ENCODE measurements at regions of chr11 and their contacts with region 1.

Region 1: GRCh38 chr11:108222686-108223448 is at the start of gene ATM:
- DNase-seq: peak; percentile 94 to 100 (median 99)
- ATAC-seq: peak; percentile 78 to 79
- H3K4me3 Mint-ChIP-seq: no peak within 1 kb of the TSS
- H3K27ac Mint-ChIP-seq: no peak within 1 kb of the TSS
- H3K4me1 Mint-ChIP-seq: peaks cover 24 to 53% (median 42%) of the 10 kb centered on the region in 4 donors
- H3K27me3 Mint-ChIP-seq: no peaks in the 10 kb centered on the region
- polyA plus RNA-seq, gene ATM: 105 to 164 (median 121) TPM

Region 2: GRCh38 chr11:108237058-108237481 is 14.2 kb after region 1 on chr11:
- POLR2A ChIA-PET with region 1: interaction called, 705 read pairs
- DNase-seq: peak in 3 of 10 donors; percentile 27 to 49 (median 43)
- ATAC-seq: peak; percentile 33 to 53
- H3K4me3 Mint-ChIP-seq: peak overlapping the region; percentile 23 to 87 (median 73)
- H3K27ac Mint-ChIP-seq: peak overlapping the region in 9 of 10 donors; percentile 90 to 98 (median 96)
- H3K4me1 Mint-ChIP-seq: peaks cover 29 to 88% (median 77%) of the 10 kb centered on the region in 4 donors
- H3K27me3 Mint-ChIP-seq: no peaks in the 10 kb centered on the region

Region 3: DNA sequence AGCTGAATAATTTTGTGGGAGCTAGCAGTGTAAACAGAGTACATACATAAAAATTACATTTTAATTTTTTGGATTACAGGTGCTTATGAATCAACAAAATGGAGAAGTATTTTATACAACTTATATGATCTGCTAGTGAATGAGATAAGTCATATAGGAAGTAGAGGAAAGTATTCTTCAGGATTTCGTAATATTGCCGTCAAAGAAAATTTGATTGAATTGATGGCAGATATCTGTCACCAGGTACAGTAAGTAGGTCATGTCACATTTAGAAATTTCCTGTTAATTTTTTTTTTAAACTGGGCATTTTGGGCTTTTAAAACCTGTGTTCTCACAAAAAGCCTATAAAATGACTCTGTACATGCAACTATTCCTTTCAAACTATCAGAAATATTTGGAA is 24.0 kb after region 1 on chr11:
- POLR2A ChIA-PET with region 1: interaction called, 705 read pairs
- DNase-seq: no peak
- ATAC-seq: no peak
- H3K4me3 Mint-ChIP-seq: peak overlapping the region in 8 of 10 donors; percentile 1 to 73 (median 20)
- H3K27ac Mint-ChIP-seq: peak overlapping the region in 9 of 10 donors; percentile 34 to 95 (median 79)
- H3K4me1 Mint-ChIP-seq: peaks cover 25 to 86% (median 80%) of the 10 kb centered on the region in 4 donors
- H3K27me3 Mint-ChIP-seq: no peaks in the 10 kb centered on the region

Region 4: DNA sequence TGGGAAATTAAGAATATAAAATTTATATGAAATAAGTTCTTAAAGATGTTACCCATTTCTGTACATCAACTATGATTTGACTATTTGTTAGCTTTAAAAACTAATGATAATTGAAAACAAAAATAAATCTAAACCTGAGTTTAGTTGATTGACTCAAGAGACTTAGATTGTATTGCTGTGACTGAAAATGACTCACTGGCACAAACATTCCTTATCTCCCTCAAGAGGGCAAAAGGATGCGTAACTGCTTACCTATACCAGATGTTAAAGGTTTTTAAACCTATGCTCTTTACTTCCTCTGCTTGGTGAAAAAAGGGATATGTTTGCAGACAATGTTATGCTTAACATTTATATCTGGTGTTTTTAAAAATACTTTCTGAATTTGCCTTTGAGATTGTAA is 30.3 kb after region 1 on chr11:
- POLR2A ChIA-PET with region 1: interaction called, 75 read pairs
- DNase-seq: no peak
- ATAC-seq: peak; percentile 47 to 61
- H3K4me3 Mint-ChIP-seq: peak overlapping the region in 1 of 10 donors; percentile 26
- H3K27ac Mint-ChIP-seq: peak overlapping the region in 9 of 10 donors; percentile 18 to 90 (median 76)
- H3K4me1 Mint-ChIP-seq: peaks cover 18 to 79% (median 65%) of the 10 kb centered on the region in 4 donors
- H3K27me3 Mint-ChIP-seq: no peaks in the 10 kb centered on the region

Region 5: GRCh38 chr11:108278546-108278945 is 55.7 kb after region 1 on chr11:
- POLR2A ChIA-PET with region 1: interaction called, 52 read pairs
- DNase-seq: no peak
- ATAC-seq: peak; percentile 37 to 51
- H3K4me3 Mint-ChIP-seq: peak overlapping the region in 8 of 10 donors; percentile 14 to 70 (median 50)
- H3K27ac Mint-ChIP-seq: peak overlapping the region; percentile 34 to 91 (median 84)
- H3K4me1 Mint-ChIP-seq: peaks cover 38 to 79% (median 74%) of the 10 kb centered on the region in 4 donors
- H3K27me3 Mint-ChIP-seq: no peaks in the 10 kb centered on the region

Region 6: DNA sequence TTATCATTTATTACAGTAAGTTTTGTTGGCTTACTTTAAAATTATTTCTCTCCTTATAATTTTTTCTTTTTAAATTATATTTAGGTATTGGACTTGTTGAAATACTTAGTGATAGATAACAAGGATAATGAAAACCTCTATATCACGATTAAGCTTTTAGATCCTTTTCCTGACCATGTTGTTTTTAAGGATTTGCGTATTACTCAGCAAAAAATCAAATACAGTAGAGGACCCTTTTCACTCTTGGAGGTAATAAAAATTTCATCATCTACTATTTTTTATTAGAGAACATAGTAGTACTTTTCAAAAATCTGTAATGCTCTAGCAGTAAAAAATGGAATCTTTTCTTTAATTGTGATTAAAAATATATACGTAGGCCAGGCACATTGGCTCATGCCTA is 70.4 kb after region 1 on chr11:
- POLR2A ChIA-PET with region 1: interaction called, 15 read pairs
- DNase-seq: no peak
- ATAC-seq: no peak
- H3K4me3 Mint-ChIP-seq: no peak overlapping the region
- H3K27ac Mint-ChIP-seq: peak overlapping the region in 1 of 10 donors; percentile 27
- H3K4me1 Mint-ChIP-seq: peaks cover 4 to 27% (median 26%) of the 10 kb centered on the region in 4 donors
- H3K27me3 Mint-ChIP-seq: no peaks in the 10 kb centered on the region

Measured in naive thymus-derived CD8-positive, alpha-beta T cell (primary cell).